Caco-2 (cell line): ENCODE measurements at regions of chr11 and their contacts with region 1.

Region 1: GRCh38 chr11:56841210-56841810 is 92.8 kb upstream of the OR9G4 start:
- DNase-seq: peak; percentile 50 to 60
- H3K4me3 ChIP-seq: no peak overlapping the region
- H3K4me3 Mint-ChIP-seq: no peak overlapping the region
- H3K27ac Mint-ChIP-seq: no peak overlapping the region
- H3K4me1 ChIP-seq: no peaks in the 10 kb centered on the region
- H3K4me1 Mint-ChIP-seq: no peaks in the 10 kb centered on the region
- H3K27me3 ChIP-seq: no peaks in the 10 kb centered on the region
- H3K27me3 Mint-ChIP-seq: peaks cover 2% of the 10 kb centered on the region
- CTCF ChIP-seq: peak; percentile 73 to 87

Region 2: GRCh38 chr11:56693428-56693827 is 147.9 kb before region 1 on chr11:
- CTCF ChIA-PET with region 1: no interaction called
- POLR2A ChIA-PET with region 1: no interaction called
- intact Hi-C with region 1: no loop called
- DNase-seq: no peak
- H3K4me3 ChIP-seq: no peak overlapping the region
- H3K4me3 Mint-ChIP-seq: no peak overlapping the region
- H3K27ac Mint-ChIP-seq: no peak overlapping the region
- H3K4me1 ChIP-seq: no peaks in the 10 kb centered on the region
- H3K4me1 Mint-ChIP-seq: no peaks in the 10 kb centered on the region
- H3K27me3 ChIP-seq: no peaks in the 10 kb centered on the region
- H3K27me3 Mint-ChIP-seq: peaks cover 7% of the 10 kb centered on the region
- CTCF ChIP-seq: no peak

Region 3: GRCh38 chr11:57001674-57002401 is 160.5 kb after region 1 on chr11:
- CTCF ChIA-PET with region 1: no interaction called
- POLR2A ChIA-PET with region 1: no interaction called
- intact Hi-C with region 1: loop called (anchors 10 kb)
- DNase-seq: no peak
- H3K4me3 ChIP-seq: no peak overlapping the region
- H3K4me3 Mint-ChIP-seq: no peak overlapping the region
- H3K27ac Mint-ChIP-seq: no peak overlapping the region
- H3K4me1 ChIP-seq: no peaks in the 10 kb centered on the region
- H3K4me1 Mint-ChIP-seq: no peaks in the 10 kb centered on the region
- H3K27me3 ChIP-seq: no peaks in the 10 kb centered on the region
- H3K27me3 Mint-ChIP-seq: no peaks in the 10 kb centered on the region
- CTCF ChIP-seq: no peak

Region 4: GRCh38 chr11:57049749-57050148 is 208.4 kb after region 1 on chr11:
- CTCF ChIA-PET with region 1: no interaction called
- POLR2A ChIA-PET with region 1: no interaction called
- intact Hi-C with region 1: loop called (anchors 1 kb)
- DNase-seq: no peak
- H3K4me3 ChIP-seq: no peak overlapping the region
- H3K4me3 Mint-ChIP-seq: no peak overlapping the region
- H3K27ac Mint-ChIP-seq: no peak overlapping the region
- H3K4me1 ChIP-seq: no peaks in the 10 kb centered on the region
- H3K4me1 Mint-ChIP-seq: no peaks in the 10 kb centered on the region
- H3K27me3 ChIP-seq: no peaks in the 10 kb centered on the region
- H3K27me3 Mint-ChIP-seq: peaks cover 3% of the 10 kb centered on the region
- CTCF ChIP-seq: no peak

Region 5: GRCh38 chr11:57085611-57086010 is 244.3 kb after region 1 on chr11:
- CTCF ChIA-PET with region 1: interaction called, 5 read pairs
- POLR2A ChIA-PET with region 1: no interaction called
- intact Hi-C with region 1: loop called (anchors 1 kb)
- DNase-seq: no peak
- H3K4me3 ChIP-seq: no peak overlapping the region
- H3K4me3 Mint-ChIP-seq: no peak overlapping the region
- H3K27ac Mint-ChIP-seq: no peak overlapping the region
- H3K4me1 ChIP-seq: no peaks in the 10 kb centered on the region
- H3K4me1 Mint-ChIP-seq: no peaks in the 10 kb centered on the region
- H3K27me3 ChIP-seq: no peaks in the 10 kb centered on the region
- H3K27me3 Mint-ChIP-seq: no peaks in the 10 kb centered on the region
- CTCF ChIP-seq: no peak

Region 6: GRCh38 chr11:57116654-57117053 is 275.3 kb after region 1 on chr11:
- CTCF ChIA-PET with region 1: interaction called, 5 read pairs
- POLR2A ChIA-PET with region 1: no interaction called
- intact Hi-C with region 1: loop called (anchors 1 kb)
- DNase-seq: peak; percentile 49 to 57
- H3K4me3 ChIP-seq: no peak overlapping the region
- H3K4me3 Mint-ChIP-seq: no peak overlapping the region
- H3K27ac Mint-ChIP-seq: no peak overlapping the region
- H3K4me1 ChIP-seq: no peaks in the 10 kb centered on the region; the same call in 1 of the 2 replicates
- H3K4me1 Mint-ChIP-seq: no peaks in the 10 kb centered on the region
- H3K27me3 ChIP-seq: no peaks in the 10 kb centered on the region
- H3K27me3 Mint-ChIP-seq: peaks cover 6% of the 10 kb centered on the region
- CTCF ChIP-seq: peak; percentile 60 to 74

Region 7: DNA sequence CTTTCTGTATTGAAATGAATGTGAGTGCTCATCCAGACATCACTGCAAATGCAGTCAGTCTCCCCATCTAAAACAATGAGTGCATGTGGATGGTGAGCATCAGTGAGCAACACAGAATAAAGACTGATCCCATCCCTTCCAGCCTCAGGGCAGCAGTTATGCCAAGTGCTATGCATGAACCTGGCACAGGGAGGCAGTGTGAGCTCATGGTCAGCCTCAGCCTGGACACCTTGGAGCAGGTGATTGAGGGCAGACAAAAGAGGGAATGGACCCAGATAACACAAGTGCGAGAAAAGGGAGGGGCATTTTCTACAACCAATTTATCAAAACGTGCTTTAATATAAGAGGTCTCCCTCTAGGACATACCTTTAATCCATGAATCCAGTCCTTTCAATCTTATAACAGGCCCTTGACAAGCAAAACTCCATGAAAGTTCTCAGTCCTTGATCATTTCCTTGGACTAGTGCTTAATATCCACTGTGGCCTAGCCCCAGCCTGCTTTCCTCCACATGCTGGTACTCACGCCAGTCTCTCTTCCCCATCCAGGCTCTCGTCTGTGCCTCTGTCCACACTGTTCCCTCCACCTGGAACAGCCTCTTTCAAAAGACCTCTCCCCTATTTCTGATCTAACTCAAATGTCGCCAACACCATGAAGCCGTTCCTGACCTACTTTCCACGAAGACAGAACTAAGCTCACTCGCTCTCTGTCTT is 289.9 kb after region 1 on chr11:
- CTCF ChIA-PET with region 1: no interaction called
- POLR2A ChIA-PET with region 1: no interaction called
- intact Hi-C with region 1: loop called (anchors 2 kb)
- DNase-seq: peak; percentile 53 to 58
- H3K4me3 ChIP-seq: no peak overlapping the region
- H3K4me3 Mint-ChIP-seq: no peak overlapping the region
- H3K27ac Mint-ChIP-seq: no peak overlapping the region
- H3K4me1 ChIP-seq: no peaks in the 10 kb centered on the region; the same call in 1 of the 2 replicates
- H3K4me1 Mint-ChIP-seq: no peaks in the 10 kb centered on the region
- H3K27me3 ChIP-seq: 0 out of 2 replicates have a peak, but pooled peaks cover 2% of the 10 kb centered on the region
- H3K27me3 Mint-ChIP-seq: peaks cover 26% of the 10 kb centered on the region
- CTCF ChIP-seq: peak; percentile 63 to 77

Region 8: GRCh38 chr11:57277845-57278709 is 436.8 kb after region 1 on chr11:
- CTCF ChIA-PET with region 1: no interaction called
- POLR2A ChIA-PET with region 1: no interaction called
- intact Hi-C with region 1: loop called (anchors 1 kb)
- DNase-seq: peak; percentile 83 to 84
- H3K4me3 ChIP-seq: peak overlapping the region; percentile 31
- H3K4me3 Mint-ChIP-seq: peak overlapping the region; percentile 69
- H3K27ac Mint-ChIP-seq: peak overlapping the region; percentile 78
- H3K4me1 ChIP-seq: peaks cover 10% of the 10 kb centered on the region
- H3K4me1 Mint-ChIP-seq: peaks cover 15% of the 10 kb centered on the region
- H3K27me3 ChIP-seq: no peaks in the 10 kb centered on the region
- H3K27me3 Mint-ChIP-seq: peaks cover 3% of the 10 kb centered on the region
- CTCF ChIP-seq: peak; percentile 80 to 93